ENCODE measurements at regions of chr11 and their contacts with region 1.

Region 1: DNA sequence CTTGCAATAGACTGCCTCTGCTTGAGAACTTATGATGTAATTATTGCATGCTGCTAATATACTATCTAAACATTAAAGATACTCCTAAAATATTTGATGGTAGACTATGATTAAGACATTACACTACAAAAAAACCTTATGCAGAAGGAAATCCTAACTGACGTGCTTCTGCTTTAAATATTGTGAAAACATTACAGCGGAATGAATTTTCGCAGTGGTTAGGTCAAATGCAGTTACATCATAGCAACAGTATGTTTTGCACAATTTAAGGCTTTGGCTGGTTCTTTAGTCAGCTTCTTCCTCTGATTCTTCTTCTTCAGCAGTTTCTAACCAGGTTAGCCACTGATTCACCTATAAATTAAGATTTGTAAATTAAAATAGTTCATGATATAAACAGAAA is 11.2 kb downstream of the EIF4G2 start:
- DNase-seq: no peak
- H3K4me3 ChIP-seq: no peak overlapping the region
- H3K27ac ChIP-seq: peak overlapping the region in 1 of 4 donors; percentile 7
- H3K4me1 ChIP-seq: peaks cover 0 to 27% (median 2%) of the 10 kb centered on the region in 4 donors
- H3K27me3 ChIP-seq: no peaks in the 10 kb centered on the region
- CTCF ChIP-seq: no peak
- EP300 ChIP-seq: no peak
- POLR2A ChIP-seq: no peak

Region 2: GRCh38 chr11:11022125-11022730 is 224.7 kb after region 1 on chr11:
- in situ Hi-C with region 1: loop called (anchors 5 to 10 kb)
- intact Hi-C with region 1: loop called (anchors 5 kb)
- DNase-seq: no peak
- H3K4me3 ChIP-seq: no peak overlapping the region
- H3K27ac ChIP-seq: no peak overlapping the region
- H3K4me1 ChIP-seq: no peaks in the 10 kb centered on the region
- H3K27me3 ChIP-seq: no peaks in the 10 kb centered on the region
- CTCF ChIP-seq: peak; percentile 49 to 56 (median 52)
- EP300 ChIP-seq: no peak
- POLR2A ChIP-seq: no peak

Measured in transverse colon (tissue), 4 donors.